ENCODE measurements at regions of chr1 and their contacts with region 1.

Region 1: DNA sequence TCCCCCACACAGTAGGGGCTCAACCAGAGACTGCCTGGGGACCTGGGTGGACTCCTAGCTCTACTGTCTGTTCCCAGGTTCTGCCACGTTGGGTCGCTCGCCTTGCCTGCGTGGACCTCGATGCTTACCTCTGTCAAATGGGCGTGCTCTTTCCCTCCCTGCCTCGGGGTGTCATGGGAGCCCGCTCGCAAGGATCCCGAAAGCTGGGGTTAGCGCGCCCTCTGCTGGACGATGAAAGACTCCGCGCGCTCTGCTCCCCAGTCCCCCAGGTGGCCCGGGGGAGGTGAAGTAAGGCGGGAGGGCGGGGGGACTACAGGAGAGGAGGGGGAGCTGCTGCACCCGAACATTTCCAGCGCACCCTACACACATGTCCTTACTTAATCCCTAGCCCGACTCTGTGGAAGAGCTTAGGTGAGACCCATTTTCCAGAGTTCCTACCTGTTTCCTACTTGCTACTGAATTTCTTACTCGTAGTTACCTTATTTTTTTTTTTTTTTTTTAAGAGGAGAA is 2.3 kb upstream of the BSND start:
- DNase-seq: peak; percentile 89
- H3K4me3 Mint-ChIP-seq: peak overlapping the region; percentile 18
- H3K27ac Mint-ChIP-seq: peak overlapping the region; percentile 30
- H3K4me1 Mint-ChIP-seq: peaks cover 21% of the 10 kb centered on the region
- H3K27me3 Mint-ChIP-seq: peaks cover 30% of the 10 kb centered on the region

Region 2: GRCh38 chr1:54950369-54951163 is 45.8 kb before region 1 on chr1:
- CTCF ChIA-PET with region 1: interaction called, 261 read pairs
- POLR2A ChIA-PET with region 1: no interaction called
- intact Hi-C with region 1: loop called (anchors 1 kb)
- DNase-seq: peak; percentile 73
- H3K4me3 Mint-ChIP-seq: no peak overlapping the region
- H3K27ac Mint-ChIP-seq: no peak overlapping the region
- H3K4me1 Mint-ChIP-seq: peaks cover 9% of the 10 kb centered on the region
- H3K27me3 Mint-ChIP-seq: peaks cover 2% of the 10 kb centered on the region

Region 3: DNA sequence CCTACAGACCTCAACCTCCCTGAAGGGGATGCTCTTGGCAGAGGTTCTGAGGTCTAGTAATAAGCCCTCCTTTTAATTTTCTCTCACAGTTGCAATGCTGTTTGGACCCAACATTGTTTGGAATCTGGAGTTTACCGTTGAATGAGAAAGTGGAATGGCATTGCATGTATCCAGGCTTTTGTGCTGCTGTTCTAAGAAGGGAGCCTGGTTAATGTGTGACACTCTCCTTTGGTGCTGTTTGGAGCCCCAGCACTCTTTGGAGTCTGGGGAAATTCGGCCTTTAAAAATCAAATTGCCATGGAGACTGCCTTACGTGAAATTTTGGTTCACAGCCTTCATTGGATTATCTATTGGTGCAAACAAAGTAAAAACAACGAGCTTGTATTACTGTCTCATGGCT is 39.7 kb before region 1 on chr1:
- CTCF ChIA-PET with region 1: interaction called, 261 read pairs
- POLR2A ChIA-PET with region 1: no interaction called
- intact Hi-C with region 1: no loop called
- DNase-seq: no peak
- H3K4me3 Mint-ChIP-seq: no peak overlapping the region
- H3K27ac Mint-ChIP-seq: no peak overlapping the region
- H3K4me1 Mint-ChIP-seq: no peaks in the 10 kb centered on the region
- H3K27me3 Mint-ChIP-seq: peaks cover 2% of the 10 kb centered on the region

Region 4: GRCh38 chr1:55015731-55016620 is 19.6 kb after region 1 on chr1:
- CTCF ChIA-PET with region 1: interaction called, 23 read pairs
- POLR2A ChIA-PET with region 1: no interaction called
- intact Hi-C with region 1: no loop called
- DNase-seq: no peak
- H3K4me3 Mint-ChIP-seq: no peak overlapping the region
- H3K27ac Mint-ChIP-seq: no peak overlapping the region
- H3K4me1 Mint-ChIP-seq: no peaks in the 10 kb centered on the region
- H3K27me3 Mint-ChIP-seq: peaks cover 12% of the 10 kb centered on the region

Region 5: GRCh38 chr1:55021965-55022546 is 25.6 kb after region 1 on chr1:
- CTCF ChIA-PET with region 1: interaction called, 23 read pairs
- POLR2A ChIA-PET with region 1: no interaction called
- intact Hi-C with region 1: no loop called
- DNase-seq: peak; percentile 80
- H3K4me3 Mint-ChIP-seq: no peak overlapping the region
- H3K27ac Mint-ChIP-seq: no peak overlapping the region
- H3K4me1 Mint-ChIP-seq: peaks cover 3% of the 10 kb centered on the region
- H3K27me3 Mint-ChIP-seq: peaks cover 11% of the 10 kb centered on the region